Psoas muscle (tissue), 8 donors: ENCODE measurements at regions of chr1 and their contacts with region 1.

Region 1: GRCh38 chr1:101410048-101410878 is 173.4 kb downstream of the S1PR1 start:
- DNase-seq: no peak
- ATAC-seq: no peak
- H3K4me3 ChIP-seq: no peak overlapping the region
- H3K27ac ChIP-seq: no peak overlapping the region
- H3K4me1 ChIP-seq: no peaks in the 10 kb centered on the region
- H3K27me3 ChIP-seq: no peaks in the 10 kb centered on the region
- CTCF ChIP-seq: no peak

Region 2: DNA sequence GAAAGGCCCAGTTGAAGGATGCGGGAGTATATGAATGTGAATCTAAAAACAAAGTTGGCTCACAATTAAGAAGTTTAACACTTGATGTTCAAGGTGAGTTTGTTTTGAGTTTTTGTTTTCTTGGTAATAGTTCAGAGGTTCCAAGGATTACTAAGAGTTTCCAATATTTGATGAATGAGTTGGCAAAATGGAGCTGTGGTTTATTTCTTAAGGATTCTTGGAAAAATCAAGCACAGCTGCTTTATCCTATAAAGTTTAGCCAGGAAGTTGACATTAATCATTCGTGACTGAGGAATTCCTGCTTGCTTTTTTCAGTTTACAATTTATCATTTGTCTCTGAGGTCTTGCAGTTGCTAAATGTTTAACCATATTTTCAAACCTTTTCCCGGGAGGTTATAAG is 675.6 kb before region 1 on chr1:
- intact Hi-C with region 1: loop called in 1 of 2 experiments (anchors 10 kb)
- DNase-seq: no peak
- ATAC-seq: no peak
- H3K4me3 ChIP-seq: no peak overlapping the region
- H3K27ac ChIP-seq: no peak overlapping the region
- H3K4me1 ChIP-seq: no peaks in the 10 kb centered on the region
- H3K27me3 ChIP-seq: no peaks in the 10 kb centered on the region
- CTCF ChIP-seq: no peak

Region 3: DNA sequence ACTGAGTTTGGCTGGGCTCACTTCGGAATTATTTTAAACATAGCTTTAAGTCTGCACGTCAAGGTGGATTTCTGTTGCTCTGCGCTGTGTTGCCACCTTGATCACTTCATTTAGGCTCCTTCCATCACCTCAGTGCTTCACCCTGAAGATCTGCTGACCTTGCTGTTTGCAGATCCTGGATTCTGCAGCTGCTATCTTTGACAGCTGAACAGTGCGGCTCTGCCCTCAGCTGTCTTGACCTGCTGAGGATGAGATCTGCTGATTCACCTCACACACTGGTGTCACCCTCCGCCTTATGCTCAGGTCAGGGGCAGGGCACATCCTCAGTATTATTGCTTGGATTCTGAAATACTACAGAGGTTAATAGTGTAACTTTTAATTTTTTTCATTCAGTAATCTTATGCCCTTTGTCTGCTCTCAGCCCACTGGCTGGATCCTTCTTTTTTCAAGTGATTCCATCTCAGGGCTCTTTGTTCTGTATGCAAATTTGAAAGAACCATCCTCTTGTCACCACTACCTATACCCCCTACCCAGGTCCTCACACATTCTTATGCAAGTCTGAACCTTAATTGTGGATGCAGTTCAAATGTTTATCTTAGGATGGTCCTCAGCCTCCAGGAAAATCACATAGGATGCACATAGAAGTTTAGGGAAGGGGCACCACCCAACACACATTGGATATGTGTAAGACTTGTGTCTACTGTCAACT is 222.4 kb after region 1 on chr1:
- intact Hi-C with region 1: no loop called
- DNase-seq: no peak
- ATAC-seq: no peak
- H3K4me3 ChIP-seq: no peak overlapping the region
- H3K27ac ChIP-seq: no peak overlapping the region
- H3K4me1 ChIP-seq: no peaks in the 10 kb centered on the region
- H3K27me3 ChIP-seq: no peaks in the 10 kb centered on the region
- CTCF ChIP-seq: no peak